A549 (cell line): ENCODE measurements at regions of chr2 and their contacts with region 1.

Region 1: GRCh38 chr2:72579591-72580180 is 246.1 kb downstream of the EXOC6B start:
- DNase-seq: peak in 1 of 2 experiments; percentile 74
- ATAC-seq: peak; percentile 47 to 79; a peak in 4 of 6 replicates
- H3K4me3 ChIP-seq: no peak overlapping the region
- H3K27ac ChIP-seq: no peak overlapping the region; a peak in 1 of 6 replicates
- H3K4me1 ChIP-seq: peaks cover 23% of the 10 kb centered on the region
- CTCF ChIP-seq: peak; percentile 97
- EP300 ChIP-seq: no peak
- POLR2A ChIP-seq: no peak
- RAD21 ChIP-seq: peak; percentile 94 to 97

Region 2: GRCh38 chr2:71778936-71779773 is 800.5 kb before region 1 on chr2:
- CTCF ChIA-PET with region 1: interaction called, 10 read pairs
- POLR2A ChIA-PET with region 1: no interaction called
- DNase-seq: peak in 1 of 2 experiments; percentile 42
- ATAC-seq: peak; percentile 50 to 68; a peak in 4 of 6 replicates
- H3K4me3 ChIP-seq: no peak overlapping the region
- H3K27ac ChIP-seq: peak overlapping the region; percentile 52 to 66; a peak in 4 of 6 replicates
- H3K4me1 ChIP-seq: peaks cover 28% of the 10 kb centered on the region
- CTCF ChIP-seq: peak; percentile 50
- EP300 ChIP-seq: no peak
- POLR2A ChIP-seq: no peak
- RAD21 ChIP-seq: peak; percentile 69 to 76

Region 3: GRCh38 chr2:71798266-71799012 is 781.2 kb before region 1 on chr2:
- CTCF ChIA-PET with region 1: interaction called, 15 read pairs
- POLR2A ChIA-PET with region 1: no interaction called
- DNase-seq: peak; percentile 71 to 74
- ATAC-seq: peak; percentile 73 to 90
- H3K4me3 ChIP-seq: no peak overlapping the region
- H3K27ac ChIP-seq: no peak overlapping the region
- H3K4me1 ChIP-seq: peaks cover 9% of the 10 kb centered on the region
- CTCF ChIP-seq: peak; percentile 79
- EP300 ChIP-seq: no peak
- POLR2A ChIP-seq: no peak
- RAD21 ChIP-seq: peak; percentile 70 to 75

Region 4: GRCh38 chr2:72745679-72746368 is 166.1 kb after region 1 on chr2:
- CTCF ChIA-PET with region 1: interaction called, 14 read pairs
- POLR2A ChIA-PET with region 1: no interaction called
- DNase-seq: peak; percentile 40 to 87
- ATAC-seq: peak; percentile 66 to 80; a peak in 4 of 6 replicates
- H3K4me3 ChIP-seq: no peak overlapping the region
- H3K27ac ChIP-seq: peak overlapping the region; percentile 46 to 58; a peak in 4 of 6 replicates
- H3K4me1 ChIP-seq: peaks cover 39% of the 10 kb centered on the region
- CTCF ChIP-seq: peak; percentile 98
- EP300 ChIP-seq: no peak
- POLR2A ChIP-seq: no peak
- RAD21 ChIP-seq: peak; percentile 98

Region 5: GRCh38 chr2:72793798-72794440 is 214.2 kb after region 1 on chr2:
- CTCF ChIA-PET with region 1: no interaction called
- POLR2A ChIA-PET with region 1: no interaction called
- DNase-seq: peak in 1 of 2 experiments; percentile 16
- ATAC-seq: no peak; a peak in 1 of 6 replicates
- H3K4me3 ChIP-seq: no peak overlapping the region
- H3K27ac ChIP-seq: no peak overlapping the region
- H3K4me1 ChIP-seq: peaks cover 19% of the 10 kb centered on the region
- CTCF ChIP-seq: no peak
- EP300 ChIP-seq: no peak
- POLR2A ChIP-seq: no peak
- RAD21 ChIP-seq: no peak

Region 6: GRCh38 chr2:72887754-72888437 is 308.2 kb after region 1 on chr2:
- CTCF ChIA-PET with region 1: no interaction called
- POLR2A ChIA-PET with region 1: no interaction called
- DNase-seq: peak; percentile 85 to 93
- ATAC-seq: peak; percentile 70 to 79
- H3K4me3 ChIP-seq: peak overlapping the region; percentile 77
- H3K27ac ChIP-seq: peak overlapping the region; percentile 92 to 96
- H3K4me1 ChIP-seq: peaks cover 22% of the 10 kb centered on the region
- CTCF ChIP-seq: peak; percentile 96
- EP300 ChIP-seq: no peak
- POLR2A ChIP-seq: peak; percentile 38; the same call in 1 of the 2 replicates
- RAD21 ChIP-seq: peak; percentile 56 to 75